ENCODE measurements at regions of chr11 and their contacts with region 1.

Region 1: DNA sequence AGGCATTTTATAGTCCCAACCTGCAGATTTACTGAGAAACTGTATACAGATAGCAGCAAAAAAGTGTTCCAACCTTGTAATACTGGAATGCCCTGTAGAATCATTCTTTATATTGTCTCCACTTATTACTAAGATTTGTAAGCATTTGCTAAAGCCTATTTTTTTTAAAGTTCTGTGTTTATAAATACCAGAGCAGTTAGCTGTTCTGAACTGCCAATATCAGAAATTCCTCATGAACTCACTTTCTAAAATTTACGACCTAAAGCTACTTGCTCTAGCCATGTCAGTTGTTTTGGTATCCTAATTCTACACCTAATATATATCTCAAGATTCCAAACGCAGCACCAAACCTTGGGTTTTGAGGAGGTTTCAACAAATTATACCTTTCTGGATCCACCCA is 103.2 kb downstream of the C11orf65 start:
- DNase-seq: no peak
- ATAC-seq: no peak
- H3K4me3 ChIP-seq: no peak overlapping the region
- H3K27ac ChIP-seq: no peak overlapping the region
- H3K4me1 ChIP-seq: no peaks in the 10 kb centered on the region
- H3K27me3 ChIP-seq: no peaks in the 10 kb centered on the region
- CTCF ChIP-seq: no peak

Region 2: DNA sequence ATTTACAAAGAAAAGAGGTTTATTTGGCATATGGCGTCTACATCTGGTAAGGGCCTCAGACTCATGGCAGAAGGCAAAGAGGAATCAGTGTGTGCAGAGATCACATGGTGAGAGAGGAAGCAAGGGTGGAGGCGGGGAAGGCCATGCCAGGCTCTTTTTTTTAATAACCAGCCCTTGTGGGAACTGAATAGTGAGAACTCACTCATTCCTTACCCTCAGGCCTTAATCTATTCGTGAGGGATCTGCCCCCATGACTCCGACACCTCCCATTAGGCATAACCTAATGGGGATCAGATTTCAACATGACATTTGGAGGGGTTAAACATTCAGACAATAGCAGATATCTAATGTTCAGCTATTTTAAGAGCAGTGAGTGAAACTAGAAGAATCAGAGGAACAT is 85.6 kb before region 1 on chr11:
- CTCF ChIA-PET with region 1: no interaction called
- POLR2A ChIA-PET with region 1: no interaction called
- in situ Hi-C with region 1: no loop called
- intact Hi-C with region 1: no loop called
- DNase-seq: no peak
- ATAC-seq: no peak
- H3K4me3 ChIP-seq: no peak overlapping the region
- H3K27ac ChIP-seq: no peak overlapping the region
- H3K4me1 ChIP-seq: no peaks in the 10 kb centered on the region
- H3K27me3 ChIP-seq: no peaks in the 10 kb centered on the region
- CTCF ChIP-seq: no peak

Region 3: DNA sequence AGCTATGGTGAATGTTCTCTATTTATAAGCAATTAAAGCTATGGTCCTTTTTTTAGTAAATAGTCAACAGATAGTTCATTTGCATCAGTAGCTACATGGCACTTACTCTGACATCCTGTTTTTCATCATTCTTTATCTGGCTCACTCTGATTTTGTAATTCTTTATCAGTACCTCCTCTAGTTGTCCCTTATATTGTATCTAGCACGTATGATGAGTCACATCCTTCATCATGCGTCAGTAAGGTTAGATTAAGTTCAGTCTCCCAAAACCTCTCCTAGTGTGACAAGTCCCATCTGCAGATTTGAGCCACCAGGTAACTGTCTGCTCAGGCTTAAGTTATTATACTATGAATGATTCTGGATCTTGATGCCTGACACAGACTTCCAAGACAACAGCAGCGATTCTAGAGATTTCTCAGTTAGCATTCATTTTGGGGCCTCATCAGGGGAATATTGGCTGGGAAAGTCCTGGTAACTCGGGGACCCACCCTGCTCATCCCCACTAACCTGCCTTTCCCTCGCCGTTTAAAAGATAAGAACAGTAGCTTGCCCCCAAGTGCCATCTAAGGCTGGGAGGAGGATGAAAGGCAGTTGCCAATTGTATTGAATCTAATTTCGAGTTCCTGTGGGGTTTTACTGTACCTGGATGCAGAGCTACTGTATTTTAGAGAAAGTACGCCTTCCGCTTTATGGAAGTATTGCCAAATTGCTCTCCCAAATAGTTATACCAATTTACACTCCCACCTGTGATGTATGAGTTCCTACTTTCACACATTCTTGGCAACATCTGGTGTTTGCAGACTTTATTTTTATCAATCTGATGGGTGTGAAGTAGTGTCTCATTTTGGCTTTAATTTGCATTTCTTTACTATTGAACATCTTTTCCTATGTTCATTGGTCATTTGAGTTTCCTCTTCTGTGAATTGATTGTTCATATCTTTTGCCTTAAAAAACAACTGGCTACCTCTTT is 1784.9 kb after region 1 on chr11:
- CTCF ChIA-PET with region 1: no interaction called
- POLR2A ChIA-PET with region 1: interaction called, 11 read pairs
- in situ Hi-C with region 1: no loop called
- intact Hi-C with region 1: no loop called
- DNase-seq: no peak
- ATAC-seq: no peak
- H3K4me3 ChIP-seq: no peak overlapping the region
- H3K27ac ChIP-seq: no peak overlapping the region
- H3K4me1 ChIP-seq: peaks cover 5% of the 10 kb centered on the region
- H3K27me3 ChIP-seq: no peaks in the 10 kb centered on the region
- CTCF ChIP-seq: no peak